Vagina (tissue), 2 donors: ENCODE measurements at regions of chr3 and their contacts with region 1.

Region 1: DNA sequence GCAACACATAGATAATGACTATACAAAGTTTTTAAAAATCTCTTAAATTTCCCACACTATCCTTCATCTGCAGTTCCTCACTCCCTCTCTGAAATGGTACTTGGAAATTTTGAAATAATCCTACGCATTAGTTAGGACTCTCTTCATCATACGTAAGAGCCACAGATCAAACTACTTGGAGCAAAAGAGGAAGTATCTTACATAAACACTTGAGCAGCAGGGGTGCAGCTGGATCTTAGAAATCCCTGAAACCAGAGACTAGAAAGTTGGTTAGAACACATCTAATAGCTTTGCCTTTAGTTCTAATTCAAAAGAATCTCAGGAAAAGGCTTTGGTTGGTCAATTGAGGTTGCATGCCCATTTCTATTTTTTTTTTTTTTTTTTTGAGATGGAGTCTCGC is 38.8 kb upstream of the ZNF445 start:
- DNase-seq: no peak
- H3K4me3 ChIP-seq: no peak overlapping the region
- H3K27ac ChIP-seq: no peak overlapping the region
- H3K4me1 ChIP-seq: peaks cover 4% of the 10 kb centered on the region
- H3K27me3 ChIP-seq: no peaks in the 10 kb centered on the region
- CTCF ChIP-seq: no peak
- POLR2A ChIP-seq: no peak

Region 2: GRCh38 chr3:44418549-44418948 is 97.7 kb before region 1 on chr3:
- intact Hi-C with region 1: no loop called
- DNase-seq: peak in 1 of 2 donors; percentile 10
- H3K4me3 ChIP-seq: no peak overlapping the region
- H3K27ac ChIP-seq: no peak overlapping the region
- H3K4me1 ChIP-seq: no peaks in the 10 kb centered on the region
- H3K27me3 ChIP-seq: no peaks in the 10 kb centered on the region
- CTCF ChIP-seq: no peak
- POLR2A ChIP-seq: no peak

Region 3: GRCh38 chr3:44529927-44530326 is 13.7 kb after region 1 on chr3:
- intact Hi-C with region 1: loop called (anchors 1 kb)
- DNase-seq: no peak
- H3K4me3 ChIP-seq: no peak overlapping the region
- H3K27ac ChIP-seq: no peak overlapping the region
- H3K4me1 ChIP-seq: no peaks in the 10 kb centered on the region
- H3K27me3 ChIP-seq: no peaks in the 10 kb centered on the region
- CTCF ChIP-seq: no peak
- POLR2A ChIP-seq: no peak

Region 4: DNA sequence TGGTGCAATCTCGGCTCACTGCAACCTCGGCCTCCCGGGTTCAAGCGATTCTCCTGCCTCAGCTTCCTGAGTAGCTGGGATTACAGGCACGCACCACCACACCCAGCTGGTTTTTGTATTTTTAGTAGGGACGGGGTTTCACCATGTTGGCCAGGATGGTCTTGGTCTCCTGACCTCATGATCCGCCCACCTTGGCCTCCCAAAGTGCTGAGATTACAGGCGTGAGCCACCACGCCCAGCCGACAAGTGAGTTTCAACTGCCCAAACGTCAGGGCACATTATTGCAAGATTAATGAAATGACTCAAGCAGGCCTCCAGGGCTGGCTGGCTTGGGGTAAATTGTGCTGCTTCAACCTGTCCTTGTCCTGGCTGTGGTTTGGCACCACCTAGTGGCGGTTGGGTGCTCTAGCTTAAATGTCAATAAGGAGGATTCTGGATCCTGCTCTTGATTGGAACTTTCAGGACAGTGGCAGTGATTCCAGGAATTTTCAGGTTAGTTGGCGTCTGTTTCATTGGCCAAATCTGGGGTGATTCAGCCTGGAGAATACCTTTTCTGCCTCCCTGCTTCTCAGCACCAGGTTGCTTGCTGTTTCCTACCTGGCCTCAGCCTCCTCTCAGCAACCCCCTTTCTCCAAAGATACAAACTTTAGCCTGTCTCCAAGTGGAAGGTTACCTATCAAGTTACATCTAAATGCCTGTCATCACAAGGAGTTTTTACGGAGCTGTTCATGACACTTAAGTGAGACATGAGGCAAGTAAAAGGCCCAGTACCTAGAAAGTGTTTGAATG is 1140.5 kb after region 1 on chr3:
- intact Hi-C with region 1: no loop called
- DNase-seq: no peak
- H3K4me3 ChIP-seq: no peak overlapping the region
- H3K27ac ChIP-seq: no peak overlapping the region
- H3K4me1 ChIP-seq: peaks cover 8% of the 10 kb centered on the region
- H3K27me3 ChIP-seq: no peaks in the 10 kb centered on the region
- CTCF ChIP-seq: peak; percentile 82 to 98 (median 93)
- POLR2A ChIP-seq: no peak